Naive thymus-derived CD4-positive, alpha-beta T cell (primary cell): ENCODE measurements at regions of chr17 and their contacts with region 1.

Region 1: GRCh38 chr17:55540414-55541091 is 29.3 kb upstream of the SMIM36 start:
- DNase-seq: no peak
- ATAC-seq: no peak
- H3K4me3 ChIP-seq: no peak overlapping the region
- H3K4me3 Mint-ChIP-seq: no peak overlapping the region
- H3K27ac ChIP-seq: no peak overlapping the region
- H3K27ac Mint-ChIP-seq: no peak overlapping the region
- H3K4me1 ChIP-seq: no peaks in the 10 kb centered on the region
- H3K4me1 Mint-ChIP-seq: no peaks in the 10 kb centered on the region
- H3K27me3 ChIP-seq: no peaks in the 10 kb centered on the region
- H3K27me3 Mint-ChIP-seq: peaks cover 4 to 17% (median 9%) of the 10 kb centered on the region in 5 donors

Region 2: GRCh38 chr17:55576996-55577586 is 36.5 kb after region 1 on chr17:
- CTCF ChIA-PET with region 1: no interaction called
- POLR2A ChIA-PET with region 1: no interaction called
- intact Hi-C with region 1: loop called in 1 of 2 experiments (anchors 5 kb)
- DNase-seq: peak in 8 of 9 donors; percentile 11 to 56 (median 50)
- ATAC-seq: peak; percentile 88
- H3K4me3 ChIP-seq: peak overlapping the region; percentile 49
- H3K4me3 Mint-ChIP-seq: no peak overlapping the region
- H3K27ac ChIP-seq: peak overlapping the region; percentile 60
- H3K27ac Mint-ChIP-seq: no peak overlapping the region
- H3K4me1 ChIP-seq: peaks cover 0 to 16% of the 10 kb centered on the region in 2 donors
- H3K4me1 Mint-ChIP-seq: peaks cover 0 to 10% (median 0%) of the 10 kb centered on the region in 7 donors
- H3K27me3 ChIP-seq: no peaks in the 10 kb centered on the region
- H3K27me3 Mint-ChIP-seq: peaks cover 0 to 13% (median 0%) of the 10 kb centered on the region in 5 donors